ENCODE measurements at regions of chrX and their contacts with region 1.

Region 1: GRCh38 chrX:134654398-134655012 is 3.8 kb downstream of the PLAC1 start:
- DNase-seq: peak; percentile 51
- H3K4me3 Mint-ChIP-seq: no peak overlapping the region
- H3K27ac Mint-ChIP-seq: no peak overlapping the region
- H3K4me1 Mint-ChIP-seq: peaks cover 8% of the 10 kb centered on the region
- H3K27me3 Mint-ChIP-seq: peaks cover 2% of the 10 kb centered on the region

Region 2: DNA sequence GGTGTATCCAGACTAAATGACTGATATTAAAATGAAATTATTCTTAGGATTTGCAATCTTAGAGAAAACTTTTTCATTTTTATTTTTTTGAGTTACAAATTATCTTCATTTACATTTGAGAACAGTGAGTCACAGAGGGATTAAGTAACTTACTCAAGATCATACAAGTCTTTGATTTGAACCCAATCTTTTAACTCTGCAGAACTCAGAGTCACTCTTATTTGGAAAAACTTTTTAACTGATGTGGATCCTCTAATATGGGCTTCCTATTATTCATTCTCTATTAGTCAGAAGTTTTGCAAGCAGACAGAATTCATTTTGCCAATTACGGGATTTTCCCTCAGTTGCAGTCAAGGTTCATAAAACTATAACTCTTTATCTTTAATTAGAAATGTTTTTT is 174.4 kb before region 1 on chrX:
- intact Hi-C with region 1: no loop called
- DNase-seq: no peak
- H3K4me3 Mint-ChIP-seq: no peak overlapping the region
- H3K27ac Mint-ChIP-seq: no peak overlapping the region
- H3K4me1 Mint-ChIP-seq: peaks cover 2% of the 10 kb centered on the region
- H3K27me3 Mint-ChIP-seq: no peaks in the 10 kb centered on the region

Region 3: GRCh38 chrX:134599184-134599914 is 55.2 kb before region 1 on chrX:
- intact Hi-C with region 1: loop called (anchors 2 kb)
- DNase-seq: no peak
- H3K4me3 Mint-ChIP-seq: no peak overlapping the region
- H3K27ac Mint-ChIP-seq: peak overlapping the region; percentile 41
- H3K4me1 Mint-ChIP-seq: peaks cover 4% of the 10 kb centered on the region
- H3K27me3 Mint-ChIP-seq: peaks cover 17% of the 10 kb centered on the region

Region 4: GRCh38 chrX:134908356-134908755 is 253.9 kb after region 1 on chrX:
- intact Hi-C with region 1: no loop called
- DNase-seq: peak; percentile 70
- H3K4me3 Mint-ChIP-seq: no peak overlapping the region
- H3K27ac Mint-ChIP-seq: peak overlapping the region; percentile 75
- H3K4me1 Mint-ChIP-seq: peaks cover 7% of the 10 kb centered on the region
- H3K27me3 Mint-ChIP-seq: no peaks in the 10 kb centered on the region

Measured in activated CD4-positive, alpha-beta T cell treated with anti-CD3 and anti-CD28 coated beads, Interleukin-2, amount 10 ng/mL, durations not matched to agents 24 days and 14 days (primary cell).